ENCODE measurements at regions of chr6 and their contacts with region 1.

Region 1: GRCh38 chr6:106325336-106326178 is at the start of gene ATG5:
- DNase-seq: peak; percentile 88 to 99
- ATAC-seq: peak; percentile 98
- H3K4me3 ChIP-seq: peak within 1 kb of the TSS; percentile 78
- H3K27ac ChIP-seq: peak within 1 kb of the TSS; percentile 93 to 95
- H3K4me1 ChIP-seq: peaks cover 12% of the 10 kb centered on the region
- CTCF ChIP-seq: no peak
- EP300 ChIP-seq: no peak
- POLR2A ChIP-seq: peak; percentile 59
- RAD21 ChIP-seq: no peak
- polyA plus RNA-seq, gene ATG5: 47.8 and 53.5 TPM in 2 replicates

Region 2: GRCh38 chr6:106290954-106291353 is 34.6 kb before region 1 on chr6:
- CTCF ChIA-PET with region 1: no interaction called
- POLR2A ChIA-PET with region 1: no interaction called
- DNase-seq: peak in 1 of 2 experiments; percentile 10
- ATAC-seq: no peak
- H3K4me3 ChIP-seq: no peak overlapping the region
- H3K27ac ChIP-seq: no peak overlapping the region
- H3K4me1 ChIP-seq: no peaks in the 10 kb centered on the region
- CTCF ChIP-seq: no peak
- EP300 ChIP-seq: no peak
- POLR2A ChIP-seq: no peak
- RAD21 ChIP-seq: no peak

Region 3: GRCh38 chr6:106339334-106340029 is 13.9 kb after region 1 on chr6:
- CTCF ChIA-PET with region 1: interaction called, 17 read pairs
- POLR2A ChIA-PET with region 1: interaction called, 8 read pairs
- DNase-seq: peak; percentile 56 to 86
- ATAC-seq: peak; percentile 99
- H3K4me3 ChIP-seq: peak overlapping the region; percentile 28; the same call in 2 of the 3 replicates
- H3K27ac ChIP-seq: peak overlapping the region in 1 of 2 experiments; percentile 30; a peak in 2 of 6 replicates
- H3K4me1 ChIP-seq: no peaks in the 10 kb centered on the region
- CTCF ChIP-seq: peak; percentile 71
- EP300 ChIP-seq: no peak
- POLR2A ChIP-seq: no peak
- RAD21 ChIP-seq: peak; percentile 64

Measured in A549 (cell line).